Activated CD4-positive, alpha-beta memory T cell treated with anti-CD3 and anti-CD28 coated beads, Interleukin-2, amount 10 ng/mL, durations not matched to agents 7 days and 5 days (primary cell): ENCODE measurements at regions of chr6 and their contacts with region 1.

Region 1: GRCh38 chr6:27809939-27810767 is 102.0 kb downstream of the OR2B2 start:
- DNase-seq: peak; percentile 83
- H3K4me3 Mint-ChIP-seq: peak overlapping the region; percentile 85
- H3K27ac Mint-ChIP-seq: peak overlapping the region; percentile 99
- H3K4me1 Mint-ChIP-seq: peaks cover 62% of the 10 kb centered on the region
- H3K27me3 Mint-ChIP-seq: no peaks in the 10 kb centered on the region

Region 2: GRCh38 chr6:26031595-26032339 is 1778.4 kb before region 1 on chr6:
- CTCF ChIA-PET with region 1: no interaction called
- POLR2A ChIA-PET with region 1: interaction called, 93 read pairs
- DNase-seq: peak; percentile 92
- H3K4me3 Mint-ChIP-seq: peak overlapping the region; percentile 84
- H3K27ac Mint-ChIP-seq: peak overlapping the region; percentile 100
- H3K4me1 Mint-ChIP-seq: peaks cover 74% of the 10 kb centered on the region
- H3K27me3 Mint-ChIP-seq: peaks cover 4% of the 10 kb centered on the region

Region 3: GRCh38 chr6:26196846-26197648 is 1613.1 kb before region 1 on chr6:
- CTCF ChIA-PET with region 1: no interaction called
- POLR2A ChIA-PET with region 1: interaction called, 91 read pairs
- DNase-seq: peak; percentile 85
- H3K4me3 Mint-ChIP-seq: peak overlapping the region; percentile 93
- H3K27ac Mint-ChIP-seq: peak overlapping the region; percentile 96
- H3K4me1 Mint-ChIP-seq: peaks cover 49% of the 10 kb centered on the region
- H3K27me3 Mint-ChIP-seq: no peaks in the 10 kb centered on the region

Region 4: GRCh38 chr6:27132532-27133280 is 677.4 kb before region 1 on chr6:
- CTCF ChIA-PET with region 1: no interaction called
- POLR2A ChIA-PET with region 1: interaction called, 390 read pairs
- DNase-seq: peak; percentile 95
- H3K4me3 Mint-ChIP-seq: no peak overlapping the region
- H3K27ac Mint-ChIP-seq: no peak overlapping the region
- H3K4me1 Mint-ChIP-seq: peaks cover 60% of the 10 kb centered on the region
- H3K27me3 Mint-ChIP-seq: no peaks in the 10 kb centered on the region

Region 5: DNA sequence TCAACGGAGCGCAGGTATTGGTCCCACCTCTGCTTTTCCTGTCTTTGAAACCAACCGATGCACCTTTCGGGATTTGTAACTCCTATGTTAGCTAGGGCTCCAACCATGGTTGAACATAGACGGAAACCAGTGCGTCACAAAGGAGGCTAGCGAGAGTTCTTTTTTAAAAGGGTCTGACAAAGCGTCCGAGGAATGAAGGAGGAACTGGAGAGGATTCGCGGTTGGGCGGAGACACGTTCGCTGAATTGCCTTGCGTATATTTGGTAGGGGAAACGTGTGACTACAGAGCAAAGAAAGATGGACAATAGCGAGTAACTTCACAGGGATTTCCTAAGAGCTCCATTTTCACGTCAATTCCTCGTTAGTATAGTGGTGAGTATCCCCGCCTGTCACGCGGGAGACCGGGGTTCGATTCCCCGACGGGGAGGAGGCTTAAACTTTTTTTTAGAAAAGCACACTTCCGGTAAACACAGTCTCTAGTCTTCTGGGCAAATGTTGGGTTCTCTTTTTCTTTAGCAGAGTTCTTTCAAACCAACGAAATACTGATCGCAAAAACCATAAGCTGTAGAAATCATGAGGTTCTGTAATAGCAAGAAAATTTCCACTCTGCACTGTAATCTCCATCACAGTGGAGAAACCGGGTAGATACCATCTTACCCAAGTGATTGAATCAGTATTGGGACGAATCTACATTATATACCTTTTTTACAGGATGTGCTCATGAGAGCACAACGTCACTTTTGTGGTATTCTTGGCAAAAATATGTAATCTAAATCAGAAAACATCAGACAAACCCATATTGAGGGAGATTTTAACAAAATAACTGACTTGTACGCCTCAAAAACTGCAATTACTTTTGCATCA is 330.6 kb before region 1 on chr6:
- CTCF ChIA-PET with region 1: no interaction called
- POLR2A ChIA-PET with region 1: interaction called, 11 read pairs
- DNase-seq: peak; percentile 86
- H3K4me3 Mint-ChIP-seq: no peak overlapping the region
- H3K27ac Mint-ChIP-seq: no peak overlapping the region
- H3K4me1 Mint-ChIP-seq: peaks cover 10% of the 10 kb centered on the region
- H3K27me3 Mint-ChIP-seq: peaks cover 4% of the 10 kb centered on the region

Region 6: DNA sequence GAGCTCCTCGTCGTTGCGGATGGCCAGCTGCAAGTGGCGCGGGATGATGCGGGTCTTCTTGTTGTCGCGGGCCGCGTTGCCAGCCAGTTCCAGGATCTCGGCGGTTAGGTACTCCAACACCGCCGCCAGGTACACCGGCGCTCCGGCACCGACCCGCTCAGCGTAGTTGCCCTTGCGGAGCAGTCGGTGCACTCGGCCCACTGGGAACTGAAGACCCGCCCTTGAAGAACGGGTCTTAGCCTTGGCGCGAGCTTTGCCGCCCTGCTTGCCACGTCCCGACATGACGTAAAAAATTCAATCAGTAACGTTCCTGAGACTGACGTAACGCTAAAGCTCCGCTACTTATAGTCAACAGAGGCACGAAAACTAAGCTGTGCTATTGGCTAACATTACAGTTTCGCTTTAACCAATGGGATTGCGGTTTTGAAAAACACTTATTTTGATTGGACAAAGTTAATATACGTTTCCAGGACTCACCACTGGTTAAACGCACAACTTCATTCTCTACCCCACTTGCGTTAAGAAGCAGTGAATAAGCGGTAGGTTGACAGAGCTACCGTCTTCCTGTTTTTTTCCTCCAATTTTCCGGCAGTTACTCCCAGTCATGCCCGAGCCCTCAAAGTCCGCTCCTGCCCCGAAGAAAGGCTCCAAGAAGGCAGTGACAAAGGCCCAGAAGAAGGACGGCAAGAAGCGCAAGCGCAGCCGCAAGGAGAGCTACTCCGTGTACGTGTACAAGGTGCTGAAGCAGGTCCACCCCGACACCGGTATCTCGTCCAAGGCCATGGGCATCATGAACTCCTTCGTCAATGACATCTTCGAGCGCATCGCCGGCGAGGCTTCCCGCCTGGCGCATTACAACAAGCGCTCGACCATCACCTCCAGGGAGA is 28.1 kb after region 1 on chr6:
- CTCF ChIA-PET with region 1: interaction called, 20 read pairs
- POLR2A ChIA-PET with region 1: interaction called, 803 read pairs
- DNase-seq: peak; percentile 90
- H3K4me3 Mint-ChIP-seq: no peak overlapping the region
- H3K27ac Mint-ChIP-seq: no peak overlapping the region
- H3K4me1 Mint-ChIP-seq: peaks cover 31% of the 10 kb centered on the region
- H3K27me3 Mint-ChIP-seq: no peaks in the 10 kb centered on the region